ENCODE measurements at regions of chr1 and their contacts with region 1.

Region 1: GRCh38 chr1:84690397-84691121 is at the start of gene SSX2IP:
- DNase-seq: peak; percentile 99 to 100 (median 100)
- ATAC-seq: peak; percentile 82
- H3K4me3 ChIP-seq: peak within 1 kb of the TSS; percentile 84
- H3K4me3 Mint-ChIP-seq: peak within 1 kb of the TSS; percentile 91
- H3K27ac ChIP-seq: peak within 1 kb of the TSS; percentile 76 to 83
- H3K27ac Mint-ChIP-seq: peak within 1 kb of the TSS; percentile 88
- H3K4me1 ChIP-seq: peaks cover 29% of the 10 kb centered on the region
- H3K4me1 Mint-ChIP-seq: peaks cover 77% of the 10 kb centered on the region
- H3K27me3 ChIP-seq: no peaks in the 10 kb centered on the region
- H3K27me3 Mint-ChIP-seq: no peaks in the 10 kb centered on the region
- CTCF ChIP-seq: no peak
- total RNA-seq, gene SSX2IP: 5.5 to 6.0 TPM

Region 2: DNA sequence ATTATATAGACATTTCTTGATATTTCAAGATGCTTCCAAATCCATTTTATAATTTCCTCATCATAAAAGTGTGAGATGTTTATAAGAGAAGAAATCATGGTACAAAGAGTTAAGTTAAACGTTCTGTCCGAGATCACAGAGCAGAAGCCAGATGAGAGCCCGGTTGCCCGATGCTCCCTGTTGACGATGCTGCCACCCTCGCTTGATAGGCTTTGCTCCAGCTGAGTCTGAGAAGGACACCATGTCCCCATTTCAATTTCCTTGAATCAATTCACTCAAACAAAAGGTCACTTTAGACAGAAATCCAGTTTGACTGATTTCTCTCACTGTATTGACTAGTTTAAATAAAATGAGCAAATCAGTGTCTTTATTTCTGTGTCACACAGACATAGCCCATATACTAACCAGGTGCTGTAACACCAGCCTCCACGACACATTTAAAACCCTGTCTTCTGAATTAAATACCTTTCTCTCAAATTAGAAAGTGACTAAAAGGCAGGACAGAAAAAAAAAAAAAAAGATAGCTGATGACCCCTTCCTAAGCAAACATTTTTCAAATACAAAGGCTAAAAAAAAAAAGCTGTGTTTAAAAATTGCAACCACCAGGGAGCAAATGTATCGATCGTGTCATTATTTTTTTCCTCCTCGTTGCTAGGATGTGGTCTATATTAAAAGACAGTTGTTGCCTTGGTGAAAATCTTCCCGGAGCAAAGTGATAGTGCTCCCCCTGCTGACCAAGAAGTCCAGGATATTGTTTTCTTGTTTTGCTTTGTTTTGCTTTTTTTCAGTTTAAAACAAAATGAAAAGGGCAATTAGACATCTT is 257.1 kb before region 1 on chr1:
- CTCF ChIA-PET with region 1: no interaction called
- POLR2A ChIA-PET with region 1: no interaction called
- intact Hi-C with region 1: loop called (anchors 5 kb)
- DNase-seq: peak in 12 of 14 experiments; percentile 21 to 91 (median 40)
- ATAC-seq: peak; percentile 79
- H3K4me3 ChIP-seq: peak overlapping the region; percentile 32
- H3K4me3 Mint-ChIP-seq: peak overlapping the region; percentile 68
- H3K27ac ChIP-seq: peak overlapping the region in 1 of 2 donors; percentile 39
- H3K27ac Mint-ChIP-seq: no peak overlapping the region
- H3K4me1 ChIP-seq: peaks cover 25% of the 10 kb centered on the region
- H3K4me1 Mint-ChIP-seq: peaks cover 11% of the 10 kb centered on the region
- H3K27me3 ChIP-seq: no peaks in the 10 kb centered on the region
- H3K27me3 Mint-ChIP-seq: no peaks in the 10 kb centered on the region
- CTCF ChIP-seq: peak; percentile 85

Region 3: GRCh38 chr1:84506002-84506728 is 184.4 kb before region 1 on chr1 and contains the starts of genes GNG5 and SPATA1:
- CTCF ChIA-PET with region 1: no interaction called
- POLR2A ChIA-PET with region 1: interaction called, 7 read pairs
- intact Hi-C with region 1: loop called (anchors 2 to 10 kb)
- DNase-seq: peak; percentile 94 to 99 (median 97)
- ATAC-seq: peak; percentile 92
- H3K4me3 ChIP-seq: peak within 1 kb of the TSS; percentile 95
- H3K4me3 Mint-ChIP-seq: peak within 1 kb of the TSS; percentile 96
- H3K27ac ChIP-seq: peak within 1 kb of the TSS; percentile 75 to 91
- H3K27ac Mint-ChIP-seq: peak within 1 kb of the TSS; percentile 88
- H3K4me1 ChIP-seq: peaks cover 21% of the 10 kb centered on the region
- H3K4me1 Mint-ChIP-seq: peaks cover 62% of the 10 kb centered on the region
- H3K27me3 ChIP-seq: no peaks in the 10 kb centered on the region
- H3K27me3 Mint-ChIP-seq: no peaks in the 10 kb centered on the region
- CTCF ChIP-seq: no peak
- total RNA-seq, gene GNG5: 23.6 to 24.6 TPM
- total RNA-seq, gene SPATA1: 0.11 to 0.61 TPM

Region 4: DNA sequence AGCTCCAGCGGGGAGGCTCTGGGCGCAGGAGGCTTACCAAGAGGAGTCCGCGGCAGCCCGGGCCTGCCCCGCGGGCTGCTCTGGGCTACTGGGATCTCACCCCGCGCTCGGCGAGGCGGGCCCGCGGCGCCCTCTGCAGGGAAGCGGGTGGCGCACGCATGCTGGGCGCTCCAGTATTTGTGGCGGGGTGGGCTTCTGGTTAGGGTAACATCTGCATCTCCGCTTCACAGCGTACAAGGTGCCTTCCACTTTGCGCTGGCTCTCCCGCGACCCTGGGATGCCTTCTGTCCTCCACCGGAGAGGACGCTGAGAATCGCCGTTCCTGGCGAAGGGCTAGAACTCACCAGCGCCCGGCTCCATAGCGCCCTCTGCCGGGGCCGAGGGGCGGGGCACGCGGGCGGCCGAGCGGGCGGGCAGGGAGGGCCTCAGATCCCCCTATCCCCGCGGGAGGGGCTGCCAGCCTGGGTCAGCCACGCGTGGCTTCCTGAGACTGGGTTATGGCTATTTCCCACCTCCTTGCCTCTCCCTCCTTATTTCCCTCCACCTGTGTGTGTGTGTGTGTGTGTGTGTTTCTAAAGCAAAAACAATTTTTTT is 69.7 kb before region 1 on chr1:
- CTCF ChIA-PET with region 1: no interaction called
- POLR2A ChIA-PET with region 1: no interaction called
- intact Hi-C with region 1: loop called in 1 of 2 experiments (anchors 5 kb)
- DNase-seq: peak; percentile 50 to 88 (median 74)
- ATAC-seq: peak; percentile 92
- H3K4me3 ChIP-seq: peak overlapping the region; percentile 64
- H3K4me3 Mint-ChIP-seq: peak overlapping the region; percentile 95
- H3K27ac ChIP-seq: no peak overlapping the region
- H3K27ac Mint-ChIP-seq: no peak overlapping the region
- H3K4me1 ChIP-seq: peaks cover 8% of the 10 kb centered on the region
- H3K4me1 Mint-ChIP-seq: peaks cover 12% of the 10 kb centered on the region
- H3K27me3 ChIP-seq: no peaks in the 10 kb centered on the region
- H3K27me3 Mint-ChIP-seq: no peaks in the 10 kb centered on the region
- CTCF ChIP-seq: peak; percentile 100

Region 5: DNA sequence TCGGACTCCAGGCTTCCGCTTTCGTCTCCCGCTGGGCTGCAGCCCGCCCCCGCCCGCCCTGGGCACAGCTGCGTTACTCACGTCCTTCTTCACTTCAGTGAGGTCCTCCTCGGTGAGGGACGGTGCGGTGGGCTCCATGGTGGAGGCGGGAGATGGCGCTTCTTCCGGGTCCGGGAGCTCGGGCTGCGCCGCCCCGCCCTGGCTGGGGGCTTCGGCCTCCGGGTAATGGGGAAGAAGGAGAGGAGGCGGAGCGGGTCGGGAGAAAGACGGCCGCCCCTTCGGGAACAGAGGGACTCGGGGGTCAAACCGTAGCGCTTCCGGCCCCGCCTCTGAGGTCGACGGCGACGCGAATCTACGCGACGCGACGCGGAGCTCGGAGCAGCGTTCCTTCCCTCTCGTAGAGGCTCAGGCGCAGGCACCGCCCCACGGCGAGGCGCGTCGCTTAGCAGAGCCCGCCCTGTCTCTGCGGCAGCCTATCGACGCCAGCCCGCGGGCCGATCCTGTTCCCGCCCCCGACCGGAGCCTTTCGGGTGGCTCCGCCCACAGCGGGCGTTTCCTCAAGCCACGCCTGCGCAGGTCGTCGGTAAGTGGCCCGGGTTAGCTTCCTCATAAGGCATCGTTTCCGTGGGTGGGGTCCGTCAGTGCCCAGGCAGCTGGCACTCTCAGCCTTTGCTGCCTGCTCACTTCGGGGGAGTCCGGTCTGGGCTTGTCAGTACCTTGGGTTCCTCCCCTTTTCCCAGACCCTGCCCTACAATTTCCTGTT is 585.8 kb after region 1 on chr1 and contains the start of gene BCL10:
- CTCF ChIA-PET with region 1: no interaction called
- POLR2A ChIA-PET with region 1: interaction called, 5 read pairs
- intact Hi-C with region 1: loop called (anchors 5 kb)
- DNase-seq: peak; percentile 93 to 99 (median 96)
- ATAC-seq: peak; percentile 95
- H3K4me3 ChIP-seq: peak within 1 kb of the TSS; percentile 94
- H3K4me3 Mint-ChIP-seq: peak within 1 kb of the TSS; percentile 92
- H3K27ac ChIP-seq: peak within 1 kb of the TSS; percentile 90 to 99
- H3K27ac Mint-ChIP-seq: peak within 1 kb of the TSS; percentile 95
- H3K4me1 ChIP-seq: peaks cover 28% of the 10 kb centered on the region
- H3K4me1 Mint-ChIP-seq: peaks cover 57% of the 10 kb centered on the region
- H3K27me3 ChIP-seq: no peaks in the 10 kb centered on the region
- H3K27me3 Mint-ChIP-seq: no peaks in the 10 kb centered on the region
- CTCF ChIP-seq: no peak
- total RNA-seq, gene BCL10: 50.0 to 52.0 TPM

Measured in CD4-positive, alpha-beta T cell (primary cell).